ENCODE measurements at regions of chr1 and their contacts with region 1.

Region 1: DNA sequence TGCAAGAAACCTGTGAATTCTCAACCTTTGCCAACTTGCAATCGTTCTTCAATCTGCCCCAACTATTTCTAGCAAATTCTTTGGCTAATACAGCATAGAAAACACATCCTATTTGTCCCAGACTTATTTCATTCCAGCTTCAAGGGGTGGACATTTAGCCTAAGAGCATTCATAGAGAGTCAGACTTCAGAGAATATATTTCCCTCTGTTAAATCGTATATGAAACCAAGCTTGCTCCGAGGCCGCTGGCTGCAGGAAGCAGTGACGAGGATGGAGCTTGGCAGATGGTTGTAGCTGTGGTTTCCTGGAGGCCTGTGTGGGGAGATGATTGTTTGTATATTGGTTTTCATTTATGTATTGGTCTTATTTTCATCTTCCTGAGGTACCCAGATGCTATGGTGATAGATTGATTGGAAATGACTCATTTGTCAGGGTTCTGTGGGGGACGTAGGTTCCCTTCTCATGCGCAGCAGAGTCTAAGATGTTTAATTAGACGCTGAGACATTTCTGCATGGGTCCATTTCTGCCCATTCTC is 26.1 kb downstream of the MAN1C1 start:
- DNase-seq: peak; percentile 71
- H3K4me3 Mint-ChIP-seq: peak overlapping the region; percentile 28
- H3K27ac Mint-ChIP-seq: peak overlapping the region; percentile 64
- H3K4me1 Mint-ChIP-seq: peaks cover 35% of the 10 kb centered on the region
- H3K27me3 Mint-ChIP-seq: peaks cover 78% of the 10 kb centered on the region

Region 2: DNA sequence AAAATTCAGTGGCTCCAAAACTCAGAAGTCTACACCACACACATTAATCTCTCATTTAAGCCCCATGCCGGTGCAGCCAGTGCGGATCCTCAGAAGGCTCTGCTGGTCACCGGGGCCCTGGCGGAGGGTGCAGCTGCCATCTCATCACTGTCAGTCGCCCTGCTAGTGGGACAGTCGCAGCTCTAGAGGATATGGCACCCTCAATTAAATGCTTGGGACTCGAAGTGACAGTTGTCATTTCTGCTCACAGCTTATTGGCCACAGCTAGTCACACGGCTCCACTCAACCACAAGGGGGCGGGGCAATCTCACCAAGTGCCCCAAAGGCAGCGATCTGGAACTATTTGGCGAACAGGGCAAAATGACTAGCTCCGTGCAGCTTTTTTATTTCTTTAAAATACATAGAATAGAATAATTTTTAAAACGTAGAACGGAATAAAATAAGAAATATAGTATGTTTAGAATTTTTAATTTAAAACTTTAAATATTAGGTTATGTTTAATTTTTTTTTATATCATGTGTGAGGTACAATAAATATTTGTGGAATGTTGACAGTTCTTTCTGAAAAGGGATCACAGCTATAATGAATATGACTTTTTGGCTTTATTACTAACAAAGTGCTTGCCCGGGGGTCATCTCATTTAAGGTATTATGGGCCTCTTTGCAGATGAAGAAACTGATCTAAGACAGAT is 34.0 kb before region 1 on chr1:
- intact Hi-C with region 1: loop called (anchors 5 kb)
- DNase-seq: peak; percentile 76
- H3K4me3 Mint-ChIP-seq: no peak overlapping the region
- H3K27ac Mint-ChIP-seq: no peak overlapping the region
- H3K4me1 Mint-ChIP-seq: no peaks in the 10 kb centered on the region
- H3K27me3 Mint-ChIP-seq: peaks cover 71% of the 10 kb centered on the region

Region 3: GRCh38 chr1:25616095-25616986 is 26.3 kb before region 1 on chr1 and contains the start of gene MAN1C1:
- intact Hi-C with region 1: loop called (anchors 1 kb)
- DNase-seq: peak; percentile 76
- H3K4me3 Mint-ChIP-seq: peak within 1 kb of the TSS; percentile 63
- H3K27ac Mint-ChIP-seq: peak within 1 kb of the TSS; percentile 57
- H3K4me1 Mint-ChIP-seq: peaks cover 45% of the 10 kb centered on the region
- H3K27me3 Mint-ChIP-seq: peaks cover 71% of the 10 kb centered on the region
- total RNA-seq, gene MAN1C1: 0.83 and 0.98 TPM in 2 replicates

Region 4: DNA sequence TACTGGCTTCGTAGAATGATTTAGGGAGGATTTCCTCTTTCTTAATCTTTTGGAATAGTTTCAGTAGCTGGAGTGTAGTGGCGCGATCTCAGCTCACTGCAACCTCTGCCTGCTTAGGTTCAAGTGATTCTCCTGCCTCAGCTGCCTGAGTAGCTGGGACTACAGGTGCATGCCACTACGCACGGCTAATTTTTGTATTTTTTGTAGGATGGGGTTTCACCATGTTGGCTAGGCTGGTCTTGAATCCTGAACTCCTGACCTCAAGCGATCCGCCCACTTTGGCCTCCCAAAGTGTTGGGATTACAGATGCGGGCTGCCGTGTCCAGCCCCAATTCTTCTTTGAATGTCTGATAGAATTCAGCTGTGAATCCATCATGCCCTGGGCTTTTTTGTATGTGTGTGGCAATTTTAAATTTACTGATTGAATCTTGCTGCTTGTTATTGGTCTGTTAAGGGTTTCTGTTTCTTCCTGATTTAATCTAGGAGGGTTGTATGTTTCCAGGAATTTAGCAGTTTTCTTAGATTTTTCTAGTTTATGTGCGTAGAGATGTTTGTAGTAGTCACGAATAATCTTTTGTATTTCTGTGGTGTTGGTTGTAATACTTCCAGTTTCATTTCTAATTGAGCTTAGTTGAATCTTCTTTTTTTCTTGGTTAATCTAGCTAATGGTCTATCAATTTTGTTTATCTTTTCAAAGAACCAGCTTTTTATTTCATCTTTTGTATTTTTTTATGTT is 10.7 kb before region 1 on chr1:
- intact Hi-C with region 1: loop called (anchors 1 kb)
- DNase-seq: no peak
- H3K4me3 Mint-ChIP-seq: peak overlapping the region; percentile 53
- H3K27ac Mint-ChIP-seq: no peak overlapping the region
- H3K4me1 Mint-ChIP-seq: peaks cover 34% of the 10 kb centered on the region
- H3K27me3 Mint-ChIP-seq: peaks cover 43% of the 10 kb centered on the region

Region 5: GRCh38 chr1:25664357-25665199 is 21.9 kb after region 1 on chr1:
- intact Hi-C with region 1: no loop called
- DNase-seq: no peak
- H3K4me3 Mint-ChIP-seq: no peak overlapping the region
- H3K27ac Mint-ChIP-seq: no peak overlapping the region
- H3K4me1 Mint-ChIP-seq: peaks cover 5% of the 10 kb centered on the region
- H3K27me3 Mint-ChIP-seq: peaks cover 70% of the 10 kb centered on the region

Region 6: DNA sequence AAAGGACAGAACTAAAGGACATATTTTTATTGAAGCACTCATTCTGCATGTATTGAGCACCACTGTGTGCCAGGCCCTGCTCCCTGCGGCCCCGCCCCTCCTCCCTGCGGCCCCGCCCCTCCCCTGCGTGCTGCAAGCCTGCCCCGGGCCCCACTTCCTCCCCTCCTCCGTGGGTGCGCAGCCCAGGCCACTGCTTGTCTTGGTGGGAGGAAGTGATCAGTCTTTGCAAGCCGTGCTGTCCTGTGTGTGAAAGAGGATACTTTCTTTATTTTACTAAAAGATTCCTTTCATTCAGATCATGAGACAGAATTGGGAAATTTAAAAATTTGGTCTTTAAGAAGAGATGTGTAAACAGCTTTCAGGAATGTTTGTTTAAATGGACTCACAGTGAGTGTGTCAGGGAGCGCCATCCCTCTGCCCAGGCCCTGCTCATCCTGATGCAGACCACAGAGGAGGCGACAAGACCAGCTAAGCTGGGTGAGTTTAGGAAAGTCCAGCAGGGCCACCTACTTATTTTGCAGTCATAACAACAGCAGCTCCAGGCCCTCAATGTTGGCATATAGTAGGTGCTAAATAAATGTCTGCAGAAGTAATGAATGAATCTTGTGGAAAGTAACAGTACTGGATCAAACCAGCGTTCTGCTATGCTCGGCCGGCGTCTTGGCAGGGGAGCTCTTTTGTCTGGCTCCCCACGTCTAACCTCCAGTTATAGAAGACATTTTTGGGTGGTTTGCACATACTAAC is 69.1 kb after region 1 on chr1:
- intact Hi-C with region 1: no loop called
- DNase-seq: no peak
- H3K4me3 Mint-ChIP-seq: no peak overlapping the region
- H3K27ac Mint-ChIP-seq: no peak overlapping the region
- H3K4me1 Mint-ChIP-seq: peaks cover 24% of the 10 kb centered on the region
- H3K27me3 Mint-ChIP-seq: peaks cover 37% of the 10 kb centered on the region

Region 7: DNA sequence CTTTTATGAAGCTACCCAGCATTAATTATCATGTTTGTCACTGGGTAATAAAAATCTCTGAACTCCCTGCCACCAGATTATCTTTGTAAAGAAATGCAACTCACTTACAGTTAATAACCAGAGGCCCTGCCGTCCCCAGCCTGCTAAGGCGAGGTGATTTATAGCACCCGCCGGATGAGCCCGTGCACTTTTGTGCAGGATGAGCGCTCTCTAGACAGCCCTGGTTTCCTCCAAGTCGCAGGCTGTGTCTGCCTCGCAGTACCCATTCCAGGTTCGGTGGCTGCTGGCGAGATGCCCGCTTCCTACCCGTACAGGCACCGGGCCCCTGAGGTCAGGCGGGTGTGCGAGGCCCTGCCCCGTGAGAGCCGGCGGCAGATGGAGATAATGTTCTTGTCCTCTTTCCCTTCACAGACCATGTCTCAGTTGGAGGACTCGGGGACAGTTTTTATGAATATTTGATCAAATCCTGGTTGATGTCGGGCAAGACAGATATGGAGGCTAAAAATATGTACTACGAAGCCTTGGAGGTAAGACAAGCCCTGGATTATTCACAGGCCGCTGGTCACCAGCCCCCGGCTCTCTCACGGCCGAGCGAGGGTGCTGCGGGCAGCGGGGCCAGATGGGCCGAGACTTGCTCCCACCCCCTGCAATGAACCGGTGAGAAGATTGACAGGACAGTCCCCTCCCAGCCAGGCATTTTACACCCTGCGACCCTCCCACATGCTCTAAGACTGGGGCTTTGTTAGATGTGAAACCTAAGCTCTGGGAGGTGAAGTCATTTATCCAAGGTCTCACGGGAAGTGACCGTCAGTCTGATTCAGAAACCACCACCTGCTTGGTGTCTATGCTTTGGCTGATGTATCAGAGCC is 128.8 kb after region 1 on chr1:
- intact Hi-C with region 1: loop called (anchors 10 kb)
- DNase-seq: no peak
- H3K4me3 Mint-ChIP-seq: no peak overlapping the region
- H3K27ac Mint-ChIP-seq: no peak overlapping the region
- H3K4me1 Mint-ChIP-seq: peaks cover 29% of the 10 kb centered on the region
- H3K27me3 Mint-ChIP-seq: peaks cover 42% of the 10 kb centered on the region

Measured in activated T-helper 1 cell treated with anti-CD3 and anti-CD28 coated beads, Interleukin-12 subunit alpha, Interleukin-12 subunit beta, Interleukin-2, Interleukin-4 antibody, amounts not matched to agents 30 ng/mL and 10 ng/mL and 1 ng/mL, durations not matched to agents 14 hours and 24 hours and 36 hours (primary cell).